ENCODE measurements at regions of chr18 and their contacts with region 1.

Region 1: GRCh38 chr18:46213295-46213694 is 109.1 kb downstream of the HAUS1 start:
- DNase-seq: no peak
- ATAC-seq: no peak
- H3K4me3 Mint-ChIP-seq: no peak overlapping the region
- H3K27ac Mint-ChIP-seq: no peak overlapping the region
- H3K4me1 Mint-ChIP-seq: peaks cover 87% of the 10 kb centered on the region
- H3K27me3 Mint-ChIP-seq: no peaks in the 10 kb centered on the region

Region 2: DNA sequence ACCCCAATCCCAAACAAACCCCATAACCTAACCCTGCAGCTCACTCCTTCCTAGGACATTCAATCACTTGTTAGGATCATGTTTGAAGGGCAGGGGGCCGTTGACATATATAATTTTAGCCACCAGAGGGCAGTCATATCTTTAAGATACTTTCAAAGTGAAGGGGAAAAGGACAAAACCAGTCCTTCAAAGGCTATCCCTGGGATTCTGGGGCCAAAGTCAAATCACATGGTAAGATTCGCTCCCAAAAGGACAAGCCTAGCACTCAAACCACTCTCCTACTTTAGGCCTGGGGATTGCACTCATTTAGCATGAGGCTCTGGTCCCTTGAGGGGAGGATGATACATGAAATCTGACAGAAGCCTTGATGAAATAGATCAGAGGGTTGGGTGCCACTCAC is 64.5 kb before region 1 on chr18:
- CTCF ChIA-PET with region 1: interaction called, 6 read pairs
- POLR2A ChIA-PET with region 1: no interaction called
- intact Hi-C with region 1: loop called in 1 of 2 experiments (anchors 1 kb)
- DNase-seq: peak; percentile 59
- ATAC-seq: peak; percentile 77
- H3K4me3 Mint-ChIP-seq: no peak overlapping the region
- H3K27ac Mint-ChIP-seq: no peak overlapping the region
- H3K4me1 Mint-ChIP-seq: peaks cover 23% of the 10 kb centered on the region
- H3K27me3 Mint-ChIP-seq: no peaks in the 10 kb centered on the region

Region 3: GRCh38 chr18:46155641-46156051 is 57.6 kb before region 1 on chr18:
- CTCF ChIA-PET with region 1: interaction called, 3 read pairs
- POLR2A ChIA-PET with region 1: no interaction called
- intact Hi-C with region 1: loop called in 1 of 2 experiments (anchors 5 kb)
- DNase-seq: peak; percentile 60
- ATAC-seq: peak; percentile 83
- H3K4me3 Mint-ChIP-seq: no peak overlapping the region
- H3K27ac Mint-ChIP-seq: peak overlapping the region; percentile 85
- H3K4me1 Mint-ChIP-seq: peaks cover 49% of the 10 kb centered on the region
- H3K27me3 Mint-ChIP-seq: no peaks in the 10 kb centered on the region

Region 4: DNA sequence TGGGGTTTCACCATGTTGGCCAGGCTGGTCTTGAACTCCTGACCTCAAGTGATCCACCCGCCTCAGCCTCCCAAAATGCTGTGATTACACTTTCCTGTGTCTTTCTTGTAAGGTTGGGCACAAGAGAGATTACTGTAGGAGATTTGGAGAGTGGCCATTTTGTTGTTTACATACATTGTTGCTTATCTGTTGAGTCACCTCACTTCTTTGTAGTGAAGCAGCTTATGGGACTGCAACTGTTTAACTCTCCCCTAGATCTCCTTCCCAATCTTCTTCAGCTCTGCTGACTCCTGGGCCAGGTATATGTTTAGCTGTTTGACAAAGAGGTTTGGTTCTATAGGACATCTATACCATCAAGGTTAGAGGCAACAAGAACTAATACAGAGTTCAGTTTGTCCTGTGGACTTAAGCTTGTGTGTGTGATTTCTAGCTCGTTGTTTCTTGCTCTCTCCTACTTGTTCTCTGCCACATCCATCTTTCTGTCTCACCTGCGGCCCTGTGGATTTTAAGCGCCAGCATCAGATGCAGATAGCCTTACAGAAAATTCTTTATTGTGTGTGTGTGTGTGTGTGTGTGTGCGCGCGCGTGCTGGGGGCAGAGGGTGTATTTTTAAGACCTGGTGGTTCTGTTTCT is 13.7 kb before region 1 on chr18:
- CTCF ChIA-PET with region 1: interaction called, 10 read pairs
- POLR2A ChIA-PET with region 1: interaction called, 5 read pairs
- intact Hi-C with region 1: no loop called
- DNase-seq: no peak
- ATAC-seq: peak; percentile 78
- H3K4me3 Mint-ChIP-seq: no peak overlapping the region
- H3K27ac Mint-ChIP-seq: peak overlapping the region; percentile 72
- H3K4me1 Mint-ChIP-seq: peaks cover 64% of the 10 kb centered on the region
- H3K27me3 Mint-ChIP-seq: no peaks in the 10 kb centered on the region

Region 5: GRCh38 chr18:46250084-46250811 is 37.0 kb after region 1 on chr18:
- CTCF ChIA-PET with region 1: no interaction called
- POLR2A ChIA-PET with region 1: interaction called, 3 read pairs
- intact Hi-C with region 1: loop called (anchors 1 kb)
- DNase-seq: peak; percentile 61
- ATAC-seq: peak; percentile 90
- H3K4me3 Mint-ChIP-seq: peak overlapping the region; percentile 62
- H3K27ac Mint-ChIP-seq: peak overlapping the region; percentile 97
- H3K4me1 Mint-ChIP-seq: peaks cover 64% of the 10 kb centered on the region
- H3K27me3 Mint-ChIP-seq: no peaks in the 10 kb centered on the region